ENCODE measurements at regions of chr17 and their contacts with region 1.

Region 1: GRCh38 chr17:68013385-68013784 is 17.1 kb upstream of the C17orf58 start:
- DNase-seq: no peak
- ATAC-seq: no peak
- H3K4me3 ChIP-seq: no peak overlapping the region
- H3K27ac ChIP-seq: no peak overlapping the region
- H3K4me1 ChIP-seq: peaks cover 35% of the 10 kb centered on the region
- H3K27me3 ChIP-seq: 0 out of 5 replicates have a peak, but pooled peaks cover 0 to 5% of the 10 kb centered on the region in 2 experiments
- CTCF ChIP-seq: no peak
- EP300 ChIP-seq: no peak
- POLR2A ChIP-seq: no peak
- RAD21 ChIP-seq: no peak

Region 2: DNA sequence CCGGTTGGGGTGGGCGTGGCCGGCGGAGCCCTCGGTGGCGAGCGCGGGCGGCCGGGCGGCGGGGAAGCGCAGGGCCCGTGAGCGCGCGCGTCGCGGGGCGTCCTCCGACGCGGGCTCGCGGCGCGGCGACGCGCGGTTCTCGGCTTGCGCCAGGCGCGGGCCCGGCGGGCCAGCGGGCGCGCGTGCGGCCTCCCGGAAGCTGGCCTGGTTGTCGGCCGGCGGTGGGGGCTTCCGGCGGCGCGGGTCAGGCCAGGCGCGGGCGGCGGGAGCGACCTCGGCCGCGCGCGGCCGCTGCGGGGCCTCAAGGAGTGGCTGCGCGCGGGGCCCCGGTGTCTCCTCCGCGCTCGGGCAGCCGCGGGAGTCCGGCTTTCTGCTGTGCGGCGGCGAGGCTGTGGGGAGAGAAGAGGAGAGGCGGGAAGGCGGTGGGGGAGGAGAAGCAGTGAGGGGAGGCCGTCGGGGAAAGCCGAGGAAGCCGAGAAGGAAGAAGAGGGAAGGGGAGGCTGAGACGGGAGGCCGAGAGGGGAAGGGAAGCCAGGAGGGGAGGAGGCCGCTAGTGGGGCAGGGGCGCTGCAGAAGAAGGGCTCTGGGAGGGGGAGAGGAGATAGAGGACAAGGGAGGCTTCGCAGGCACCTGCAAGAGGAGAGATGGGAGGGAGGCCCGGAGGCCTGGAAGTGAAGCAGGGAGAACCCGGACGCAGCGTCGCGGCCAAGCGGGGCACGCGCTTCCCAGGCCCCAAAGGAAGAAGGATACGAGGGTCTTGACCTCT is 19.6 kb before region 1 on chr17:
- CTCF ChIA-PET with region 1: no interaction called
- POLR2A ChIA-PET with region 1: interaction called, 4 read pairs
- in situ Hi-C with region 1: no loop called
- intact Hi-C with region 1: loop called (anchors 2 kb)
- DNase-seq: peak; percentile 68
- ATAC-seq: peak; percentile 59
- H3K4me3 ChIP-seq: peak overlapping the region; percentile 62 to 89 (median 72)
- H3K27ac ChIP-seq: peak overlapping the region; percentile 89
- H3K4me1 ChIP-seq: peaks cover 36% of the 10 kb centered on the region
- H3K27me3 ChIP-seq: peaks cover 0 to 7% of the 10 kb centered on the region in 2 experiments; a peak in 1 of 5 replicates
- CTCF ChIP-seq: no peak
- EP300 ChIP-seq: no peak
- POLR2A ChIP-seq: peak in 1 of 2 experiments; percentile 41; a peak in 1 of 4 replicates
- RAD21 ChIP-seq: no peak

Region 3: DNA sequence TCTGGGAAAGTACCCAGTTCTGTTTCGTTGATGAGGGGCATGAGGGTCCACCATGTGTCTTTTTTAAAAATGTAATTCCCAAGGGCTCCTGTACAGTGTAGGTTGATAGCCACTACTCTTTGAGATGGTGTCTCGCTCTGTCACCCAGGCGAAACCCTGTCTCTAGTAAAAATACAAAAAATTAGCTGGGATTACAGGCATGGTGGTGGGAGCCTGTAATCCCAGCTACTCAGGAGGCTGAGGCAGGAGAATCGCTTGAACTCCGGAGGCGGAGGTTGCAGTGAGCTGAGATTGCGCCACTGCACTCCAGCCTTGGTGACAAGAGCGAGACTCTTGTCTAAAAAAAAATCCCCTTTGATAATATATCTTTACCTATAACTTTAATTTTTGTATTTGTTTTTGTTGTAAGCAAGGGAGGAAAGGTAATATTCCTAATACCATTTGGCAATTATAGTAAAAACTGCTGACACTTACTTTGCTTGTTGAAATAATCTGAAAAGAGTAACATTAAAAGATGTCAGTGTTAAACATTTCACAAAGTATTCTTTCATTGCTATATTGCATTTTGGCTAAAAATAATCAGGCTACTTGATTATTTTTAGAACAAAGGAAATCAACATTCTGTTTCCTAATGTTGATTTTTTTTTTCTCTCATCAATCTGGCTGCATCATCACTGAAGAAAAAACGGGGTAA is 33.9 kb after region 1 on chr17:
- CTCF ChIA-PET with region 1: no interaction called
- POLR2A ChIA-PET with region 1: no interaction called
- in situ Hi-C with region 1: no loop called
- intact Hi-C with region 1: no loop called
- DNase-seq: no peak
- ATAC-seq: no peak
- H3K4me3 ChIP-seq: no peak overlapping the region
- H3K27ac ChIP-seq: no peak overlapping the region
- H3K4me1 ChIP-seq: no peaks in the 10 kb centered on the region
- H3K27me3 ChIP-seq: no peaks in the 10 kb centered on the region; a peak in 1 of 5 replicates
- CTCF ChIP-seq: no peak
- EP300 ChIP-seq: no peak
- POLR2A ChIP-seq: peak; percentile 17 to 34; a peak in 2 of 4 replicates
- RAD21 ChIP-seq: no peak

Measured in HepG2 (cell line).